Psoas muscle (tissue), 8 donors: ENCODE measurements at regions of chr3 and their contacts with region 1.

Region 1: DNA sequence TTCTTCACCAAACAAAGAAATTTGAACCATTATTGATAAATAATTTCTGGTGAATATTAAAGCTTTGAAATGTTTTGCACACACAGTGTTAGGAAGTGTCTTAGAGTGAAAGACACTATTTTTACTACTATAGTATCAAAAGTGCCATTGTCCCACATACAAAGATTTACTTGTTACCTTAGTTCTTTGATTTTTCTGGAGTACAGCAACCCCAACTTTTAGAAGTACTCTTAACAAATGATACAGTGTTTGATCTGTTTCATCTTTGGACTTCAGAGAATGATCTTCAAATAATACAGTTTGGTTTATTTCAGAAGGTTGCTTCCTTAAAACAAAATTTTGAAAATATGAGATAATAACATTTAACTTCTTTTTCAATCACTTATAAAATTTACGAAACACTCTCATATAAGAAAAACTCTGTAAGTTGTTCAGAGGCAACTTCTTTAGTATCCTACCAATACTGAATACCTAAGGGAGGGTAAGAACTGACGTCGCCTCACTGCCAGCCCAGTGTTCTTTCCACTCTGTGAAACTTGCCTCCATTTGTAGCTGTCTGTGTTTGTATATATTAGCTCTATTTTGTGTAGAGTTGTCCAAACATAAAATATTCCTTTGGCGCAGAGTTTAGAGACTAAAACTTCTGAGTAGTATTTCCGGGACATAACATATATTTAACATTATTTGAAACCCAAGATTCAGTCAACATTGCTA is 464.2 kb downstream of the LPP start:
- DNase-seq: no peak
- ATAC-seq: no peak
- H3K4me3 ChIP-seq: no peak overlapping the region
- H3K27ac ChIP-seq: no peak overlapping the region
- H3K4me1 ChIP-seq: no peaks in the 10 kb centered on the region
- H3K27me3 ChIP-seq: no peaks in the 10 kb centered on the region
- CTCF ChIP-seq: no peak

Region 2: GRCh38 chr3:188421836-188422540 is 196.2 kb before region 1 on chr3:
- intact Hi-C with region 1: no loop called
- DNase-seq: no peak
- ATAC-seq: no peak
- H3K4me3 ChIP-seq: no peak overlapping the region
- H3K27ac ChIP-seq: no peak overlapping the region
- H3K4me1 ChIP-seq: peaks cover 15% of the 10 kb centered on the region
- H3K27me3 ChIP-seq: no peaks in the 10 kb centered on the region
- CTCF ChIP-seq: no peak

Region 3: GRCh38 chr3:188507244-188507720 is 110.9 kb before region 1 on chr3:
- intact Hi-C with region 1: no loop called
- DNase-seq: no peak
- ATAC-seq: peak in 2 of 4 donors; percentile 60 to 65
- H3K4me3 ChIP-seq: no peak overlapping the region
- H3K27ac ChIP-seq: no peak overlapping the region
- H3K4me1 ChIP-seq: peaks cover 29% of the 10 kb centered on the region
- H3K27me3 ChIP-seq: no peaks in the 10 kb centered on the region
- CTCF ChIP-seq: no peak

Region 4: DNA sequence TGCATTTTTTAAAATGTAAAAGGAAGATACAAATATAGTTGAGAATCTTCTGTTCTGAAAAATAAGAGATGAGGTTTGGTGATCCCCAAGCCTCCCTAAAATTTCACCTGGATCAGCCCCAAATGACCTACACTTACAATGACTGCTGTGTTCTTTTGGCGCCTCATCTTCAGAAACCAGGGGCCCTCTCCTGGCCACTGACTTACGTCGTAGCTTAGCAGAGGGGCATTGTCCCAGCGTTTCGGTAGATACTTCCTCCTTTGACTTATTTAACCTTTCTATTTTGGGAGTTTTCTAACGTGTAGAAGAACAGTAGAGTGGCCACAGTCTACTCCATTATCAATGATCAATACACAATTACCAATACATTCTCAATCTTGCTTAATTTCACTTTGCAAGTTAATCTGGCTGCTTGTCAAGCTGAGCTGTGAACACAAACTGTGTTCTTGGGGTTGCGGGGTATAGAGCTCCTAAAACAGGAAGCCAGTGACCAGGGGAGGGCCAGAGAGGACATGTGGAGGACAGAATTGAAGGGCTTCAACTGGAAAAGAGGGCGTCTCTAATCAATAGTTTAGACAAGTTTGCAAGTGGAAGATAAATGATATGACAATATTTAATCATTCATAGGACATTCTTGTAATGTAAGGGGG is 44.7 kb before region 1 on chr3:
- intact Hi-C with region 1: no loop called
- DNase-seq: no peak
- ATAC-seq: no peak
- H3K4me3 ChIP-seq: no peak overlapping the region
- H3K27ac ChIP-seq: no peak overlapping the region
- H3K4me1 ChIP-seq: peaks cover 40% of the 10 kb centered on the region
- H3K27me3 ChIP-seq: no peaks in the 10 kb centered on the region
- CTCF ChIP-seq: no peak

Region 5: GRCh38 chr3:188659449-188660090 is 41.4 kb after region 1 on chr3:
- intact Hi-C with region 1: loop called in 1 of 2 experiments (anchors 1 kb)
- DNase-seq: no peak
- ATAC-seq: no peak
- H3K4me3 ChIP-seq: no peak overlapping the region
- H3K27ac ChIP-seq: no peak overlapping the region
- H3K4me1 ChIP-seq: peaks cover 41% of the 10 kb centered on the region
- H3K27me3 ChIP-seq: no peaks in the 10 kb centered on the region
- CTCF ChIP-seq: no peak

Region 6: GRCh38 chr3:188712248-188712924 is 94.2 kb after region 1 on chr3:
- intact Hi-C with region 1: no loop called
- DNase-seq: no peak
- ATAC-seq: peak in 1 of 4 donors; percentile 26
- H3K4me3 ChIP-seq: no peak overlapping the region
- H3K27ac ChIP-seq: no peak overlapping the region
- H3K4me1 ChIP-seq: peaks cover 4% of the 10 kb centered on the region
- H3K27me3 ChIP-seq: no peaks in the 10 kb centered on the region
- CTCF ChIP-seq: no peak